ENCODE measurements at regions of chr20 and their contacts with region 1.

Region 1: GRCh38 chr20:38730989-38731737 is 6.9 kb downstream of the SLC32A1 start:
- DNase-seq: peak; percentile 60
- H3K4me3 ChIP-seq: no peak overlapping the region
- H3K27ac ChIP-seq: no peak overlapping the region
- H3K4me1 ChIP-seq: peaks cover 6% of the 10 kb centered on the region
- H3K27me3 ChIP-seq: peaks cover 65 to 80% of the 10 kb centered on the region in 2 experiments
- CTCF ChIP-seq: peak; percentile 99
- POLR2A ChIP-seq: no peak

Region 2: DNA sequence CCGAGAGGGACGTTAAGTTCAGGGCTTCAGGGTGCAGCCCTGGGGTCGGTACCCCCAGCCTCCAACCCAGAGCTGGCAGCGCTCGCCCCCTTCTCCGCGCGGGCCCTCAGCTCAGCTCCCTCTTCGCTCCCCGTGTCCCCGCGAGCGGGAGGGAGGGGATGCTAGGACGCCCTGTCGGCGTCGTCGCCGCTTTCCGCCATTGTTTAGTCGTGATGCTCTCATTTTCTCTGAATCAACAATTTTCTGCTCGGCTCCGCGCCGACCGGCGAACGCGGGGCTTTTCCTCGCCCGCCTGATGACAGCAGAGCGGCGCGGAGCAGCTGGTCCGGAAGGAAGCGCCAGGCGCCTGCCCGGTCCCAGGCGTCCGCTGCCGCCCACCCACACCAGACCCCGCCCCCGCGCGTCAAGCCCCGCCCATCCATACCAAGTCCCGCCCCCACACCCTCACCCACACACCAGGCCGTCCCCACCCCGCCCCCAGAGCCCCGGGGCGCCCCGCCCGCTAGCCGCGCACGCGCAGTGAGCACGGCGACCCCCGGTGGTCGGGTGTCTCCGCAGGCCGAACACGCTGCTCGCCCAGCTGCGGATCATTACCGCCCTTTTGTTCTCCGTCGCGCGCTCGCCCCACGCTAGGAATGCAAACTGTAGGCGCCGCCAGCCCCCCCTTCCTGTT is 56.9 kb before region 1 on chr20:
- CTCF ChIA-PET with region 1: no interaction called
- POLR2A ChIA-PET with region 1: no interaction called
- dilution Hi-C with region 1: no loop called
- intact Hi-C with region 1: loop called (anchors 1 kb)
- DNase-seq: peak; percentile 64
- H3K4me3 ChIP-seq: peak overlapping the region; percentile 43 to 60 (median 56)
- H3K27ac ChIP-seq: peak overlapping the region; percentile 41
- H3K4me1 ChIP-seq: peaks cover 11% of the 10 kb centered on the region
- H3K27me3 ChIP-seq: no peaks in the 10 kb centered on the region
- CTCF ChIP-seq: no peak
- POLR2A ChIP-seq: peak; percentile 26

Region 3: DNA sequence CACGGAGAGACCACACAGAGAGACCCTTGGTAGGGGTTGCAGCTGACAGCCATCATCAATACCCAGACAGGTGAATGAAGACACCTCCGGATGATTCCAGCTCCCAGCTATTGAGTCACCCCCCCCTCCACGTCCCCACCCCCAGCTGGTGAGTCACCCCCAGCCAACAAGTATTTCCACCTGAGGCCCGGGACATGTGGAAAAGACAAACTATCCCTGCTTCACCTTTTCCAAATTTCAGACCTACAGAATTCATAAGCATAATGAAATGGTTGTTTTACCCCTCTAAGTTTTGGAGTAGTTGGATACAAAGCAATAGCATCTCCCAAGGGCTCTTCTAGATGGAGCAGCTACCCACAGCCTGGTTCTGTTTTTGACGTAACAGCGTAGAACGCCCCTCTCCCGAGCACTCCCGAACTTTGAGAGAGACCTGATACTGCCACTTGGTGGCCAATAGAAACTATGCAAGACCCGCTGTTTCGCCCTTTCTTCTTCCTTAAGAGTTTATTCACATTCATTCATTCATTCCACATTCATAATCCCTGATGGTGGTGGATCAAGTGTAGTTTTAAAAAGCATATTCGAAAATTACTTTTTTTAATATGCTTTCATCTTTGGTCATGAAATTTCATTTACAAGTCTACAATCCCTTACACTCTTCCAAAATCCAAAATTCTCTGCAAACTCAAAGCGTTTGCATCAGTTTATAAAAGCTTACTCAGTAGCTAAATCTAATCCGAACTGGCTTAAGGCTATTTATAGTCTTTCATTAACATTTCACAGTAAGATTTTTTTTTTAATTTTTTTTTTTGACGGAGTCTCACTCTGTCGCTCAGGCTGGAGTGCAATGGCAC is 59.3 kb after region 1 on chr20:
- CTCF ChIA-PET with region 1: interaction called, 5 read pairs
- POLR2A ChIA-PET with region 1: no interaction called
- dilution Hi-C with region 1: no loop called
- intact Hi-C with region 1: loop called (anchors 2 kb)
- DNase-seq: peak; percentile 66
- H3K4me3 ChIP-seq: no peak overlapping the region
- H3K27ac ChIP-seq: no peak overlapping the region
- H3K4me1 ChIP-seq: no peaks in the 10 kb centered on the region
- H3K27me3 ChIP-seq: peaks cover 0 to 5% of the 10 kb centered on the region in 2 experiments
- CTCF ChIP-seq: peak; percentile 59 to 66
- POLR2A ChIP-seq: no peak

Region 4: DNA sequence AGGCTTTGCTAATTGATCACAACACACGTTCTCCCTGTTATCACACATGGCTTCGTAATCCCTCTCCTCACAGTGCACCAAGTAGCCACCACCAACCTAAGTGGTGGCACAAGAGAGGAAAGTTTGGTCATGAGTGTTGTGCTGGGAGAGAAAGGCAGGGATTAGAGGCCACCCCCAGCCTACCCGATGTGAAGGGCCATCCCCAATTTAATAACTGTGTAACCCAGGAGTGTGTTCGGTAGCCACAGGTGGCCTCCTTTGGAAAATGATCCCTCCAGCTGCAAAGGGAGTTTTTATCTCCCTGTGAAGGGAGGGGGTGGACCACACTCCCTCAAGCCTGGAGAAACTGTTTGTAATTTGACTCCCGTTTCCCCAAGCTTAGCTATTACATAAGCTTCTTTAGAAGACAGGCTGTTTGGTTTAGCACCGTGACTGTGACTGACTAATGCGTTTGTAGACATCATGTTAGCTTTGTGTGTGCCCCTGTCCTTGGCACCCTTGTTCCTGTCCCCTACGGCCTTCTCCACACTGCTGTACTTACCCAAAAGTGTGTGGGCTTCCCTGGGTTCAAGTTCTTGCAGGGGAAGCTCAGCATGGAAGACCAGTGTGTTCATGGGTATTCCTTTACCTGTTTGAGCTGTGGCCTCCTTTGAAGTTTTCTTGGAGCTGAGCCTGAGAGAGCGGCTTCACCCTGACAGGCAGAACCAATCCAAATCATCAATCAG is 94.9 kb after region 1 on chr20:
- CTCF ChIA-PET with region 1: interaction called, 3 read pairs
- POLR2A ChIA-PET with region 1: no interaction called
- dilution Hi-C with region 1: no loop called
- intact Hi-C with region 1: loop called (anchors 2 kb)
- DNase-seq: peak; percentile 86
- H3K4me3 ChIP-seq: no peak overlapping the region
- H3K27ac ChIP-seq: peak overlapping the region; percentile 99
- H3K4me1 ChIP-seq: peaks cover 61% of the 10 kb centered on the region
- H3K27me3 ChIP-seq: no peaks in the 10 kb centered on the region
- CTCF ChIP-seq: no peak
- POLR2A ChIP-seq: no peak

Region 5: GRCh38 chr20:38935285-38935684 is 204.1 kb after region 1 on chr20:
- CTCF ChIA-PET with region 1: interaction called, 8 read pairs
- POLR2A ChIA-PET with region 1: no interaction called
- dilution Hi-C with region 1: no loop called
- intact Hi-C with region 1: loop called (anchors 1 kb)
- DNase-seq: peak; percentile 63
- H3K4me3 ChIP-seq: no peak overlapping the region
- H3K27ac ChIP-seq: no peak overlapping the region
- H3K4me1 ChIP-seq: peaks cover 25% of the 10 kb centered on the region
- H3K27me3 ChIP-seq: no peaks in the 10 kb centered on the region
- CTCF ChIP-seq: peak; percentile 23 to 37
- POLR2A ChIP-seq: no peak